Activated CD4-positive, alpha-beta T cell treated with anti-CD3 and anti-CD28 coated beads for 36 hours (primary cell): ENCODE measurements at regions of chr15 and their contacts with region 1.

Region 1: GRCh38 chr15:36914960-36915808 is 185.2 kb downstream of the MEIS2 start:
- DNase-seq: no peak
- ATAC-seq: no peak
- H3K4me3 Mint-ChIP-seq: no peak overlapping the region
- H3K27ac Mint-ChIP-seq: no peak overlapping the region
- H3K4me1 Mint-ChIP-seq: no peaks in the 10 kb centered on the region
- H3K27me3 Mint-ChIP-seq: no peaks in the 10 kb centered on the region

Region 2: DNA sequence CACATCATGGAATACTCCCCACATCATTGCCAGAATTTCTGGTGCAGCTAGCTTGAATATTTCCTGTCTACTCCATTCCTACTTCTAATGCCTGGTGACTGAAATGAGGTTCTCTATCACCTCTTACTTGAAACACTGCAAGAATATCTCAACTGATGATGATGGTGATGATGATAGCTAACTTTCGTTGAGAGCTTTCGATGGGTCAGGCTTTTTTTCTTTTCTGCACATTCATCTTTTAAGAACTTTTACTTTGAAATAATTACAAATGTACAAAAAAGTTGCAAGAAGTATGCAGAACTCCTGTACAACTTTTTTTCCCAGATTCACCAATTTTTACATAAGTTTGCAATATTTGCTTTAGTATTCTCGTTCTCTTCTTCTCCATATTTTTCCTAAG is 48.3 kb before region 1 on chr15:
- CTCF ChIA-PET with region 1: interaction called, 3 read pairs
- POLR2A ChIA-PET with region 1: no interaction called
- intact Hi-C with region 1: loop called in 1 of 2 experiments (anchors 5 kb)
- DNase-seq: no peak
- ATAC-seq: no peak
- H3K4me3 Mint-ChIP-seq: no peak overlapping the region
- H3K27ac Mint-ChIP-seq: no peak overlapping the region
- H3K4me1 Mint-ChIP-seq: no peaks in the 10 kb centered on the region
- H3K27me3 Mint-ChIP-seq: no peaks in the 10 kb centered on the region

Region 3: GRCh38 chr15:37217567-37217966 is 302.4 kb after region 1 on chr15:
- CTCF ChIA-PET with region 1: no interaction called
- POLR2A ChIA-PET with region 1: no interaction called
- intact Hi-C with region 1: no loop called
- DNase-seq: no peak
- ATAC-seq: no peak
- H3K4me3 Mint-ChIP-seq: no peak overlapping the region
- H3K27ac Mint-ChIP-seq: no peak overlapping the region
- H3K4me1 Mint-ChIP-seq: no peaks in the 10 kb centered on the region
- H3K27me3 Mint-ChIP-seq: no peaks in the 10 kb centered on the region